GM10248 (cell line): ENCODE measurements at regions of chr9 and their contacts with region 1.

Region 1: DNA sequence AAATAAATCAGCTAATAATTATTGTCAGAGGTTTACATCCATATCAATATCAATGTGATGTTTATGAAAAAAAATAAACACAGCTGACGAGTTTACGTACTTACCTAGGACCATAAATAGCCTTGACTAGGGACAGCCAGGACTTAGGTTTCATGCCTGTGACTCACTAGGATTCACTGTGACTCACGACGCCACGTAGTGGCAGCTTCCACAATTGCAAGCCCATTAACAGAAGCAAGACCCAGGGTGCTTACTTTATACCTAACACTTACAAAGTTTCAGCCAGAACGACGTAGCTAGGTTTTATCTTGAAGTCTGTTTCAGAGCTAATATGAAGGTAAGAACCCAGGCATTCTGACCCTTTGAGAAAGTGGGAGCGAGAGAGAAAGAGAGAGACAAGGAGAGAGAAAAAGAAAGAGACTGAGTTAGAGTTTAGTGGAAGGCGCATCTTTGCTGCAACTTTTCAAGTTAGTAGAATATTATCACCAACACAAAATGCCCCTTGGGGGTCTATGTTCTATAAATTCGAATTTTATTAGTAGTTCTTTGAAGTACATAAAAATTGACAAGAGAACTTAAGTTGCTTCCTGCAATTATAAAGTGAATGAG is 191.2 kb downstream of the GNA14 start:
- DNase-seq: peak; percentile 79
- CTCF ChIP-seq: peak; percentile 82

Region 2: DNA sequence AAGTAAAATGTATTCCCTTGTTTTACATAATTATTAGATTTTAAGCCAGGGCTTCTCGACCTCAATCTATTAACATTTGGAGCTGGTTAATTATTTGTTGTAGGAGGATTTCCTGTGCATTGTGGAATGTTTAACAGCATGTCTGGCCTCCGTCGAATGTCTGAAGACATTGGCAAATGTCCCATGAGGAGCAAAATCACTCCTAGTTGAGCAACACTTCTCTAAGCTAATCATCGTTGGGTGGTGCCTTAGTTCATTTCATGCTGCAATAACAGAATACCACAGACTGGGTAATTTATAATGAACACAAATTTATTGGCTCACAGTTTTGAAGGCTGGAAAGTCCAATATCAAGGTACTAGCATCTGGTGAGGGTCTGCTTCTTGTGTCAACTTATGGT is 293.0 kb before region 1 on chr9:
- CTCF ChIA-PET with region 1: interaction called, 21 read pairs
- POLR2A ChIA-PET with region 1: no interaction called
- DNase-seq: no peak
- CTCF ChIP-seq: no peak

Region 3: DNA sequence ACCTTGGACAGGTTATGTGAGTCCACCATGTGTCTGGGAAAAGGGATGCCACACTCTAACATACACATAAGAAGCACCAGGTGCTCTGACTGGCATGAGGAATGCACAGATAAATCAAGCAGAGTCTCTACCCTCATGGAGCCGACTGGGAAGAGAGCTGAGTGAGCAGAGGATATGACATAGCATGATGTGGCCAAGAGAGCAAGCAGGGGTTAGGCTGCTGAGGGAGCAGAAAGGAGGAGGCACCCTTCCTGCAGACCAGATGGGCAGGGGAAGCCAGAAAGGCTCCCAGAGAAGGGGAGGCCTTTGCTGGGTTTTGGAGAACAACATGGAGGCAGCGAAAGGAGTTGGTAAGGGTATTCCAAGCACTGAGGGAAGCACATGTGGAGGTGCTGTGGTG is 31.9 kb before region 1 on chr9:
- CTCF ChIA-PET with region 1: interaction called, 23 read pairs
- POLR2A ChIA-PET with region 1: no interaction called
- DNase-seq: no peak
- CTCF ChIP-seq: no peak

Region 4: GRCh38 chr9:77440057-77440456 is 16.9 kb before region 1 on chr9:
- CTCF ChIA-PET with region 1: interaction called, 162 read pairs
- POLR2A ChIA-PET with region 1: no interaction called
- DNase-seq: no peak
- CTCF ChIP-seq: no peak

Region 5: DNA sequence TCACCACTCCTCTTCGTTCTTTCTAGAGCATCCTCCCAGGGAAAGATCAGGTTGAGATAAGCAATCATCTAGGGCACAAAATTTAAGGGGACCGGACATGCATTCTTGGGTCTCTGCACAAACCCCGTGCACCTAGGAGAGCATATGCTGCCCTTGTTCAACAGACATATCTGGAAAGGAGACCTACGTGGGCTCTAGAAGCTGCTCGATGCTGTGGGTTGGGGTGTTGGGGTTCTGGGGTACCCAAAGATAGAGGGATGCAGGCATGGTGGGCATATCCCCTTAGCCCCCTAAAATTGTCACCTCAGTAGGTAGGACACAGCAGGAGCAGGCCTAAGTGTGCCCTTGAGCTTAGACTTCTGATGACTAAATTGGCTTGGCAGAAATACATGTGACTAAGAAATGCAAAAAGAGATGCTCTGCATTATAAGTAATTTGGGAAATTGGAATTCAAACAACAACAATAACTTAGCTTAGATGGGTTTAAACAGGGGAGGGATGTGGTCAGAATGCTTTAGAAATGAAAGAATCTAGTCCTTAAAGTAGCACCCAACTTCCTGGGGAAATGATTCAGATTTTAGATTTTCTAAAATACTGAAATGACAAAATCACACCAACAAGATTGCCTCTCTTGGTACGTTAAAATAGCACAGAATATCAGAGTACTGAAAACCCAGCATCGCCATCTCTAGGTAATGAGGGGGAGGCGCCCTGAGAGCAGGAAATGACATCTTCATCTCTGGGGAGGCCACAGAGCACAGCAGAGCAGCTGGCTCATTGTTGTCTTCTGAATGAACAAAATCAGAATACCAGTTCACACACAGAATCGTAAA is 18.9 kb after region 1 on chr9:
- CTCF ChIA-PET with region 1: interaction called, 99 read pairs
- POLR2A ChIA-PET with region 1: no interaction called
- DNase-seq: no peak
- CTCF ChIP-seq: no peak

Region 6: DNA sequence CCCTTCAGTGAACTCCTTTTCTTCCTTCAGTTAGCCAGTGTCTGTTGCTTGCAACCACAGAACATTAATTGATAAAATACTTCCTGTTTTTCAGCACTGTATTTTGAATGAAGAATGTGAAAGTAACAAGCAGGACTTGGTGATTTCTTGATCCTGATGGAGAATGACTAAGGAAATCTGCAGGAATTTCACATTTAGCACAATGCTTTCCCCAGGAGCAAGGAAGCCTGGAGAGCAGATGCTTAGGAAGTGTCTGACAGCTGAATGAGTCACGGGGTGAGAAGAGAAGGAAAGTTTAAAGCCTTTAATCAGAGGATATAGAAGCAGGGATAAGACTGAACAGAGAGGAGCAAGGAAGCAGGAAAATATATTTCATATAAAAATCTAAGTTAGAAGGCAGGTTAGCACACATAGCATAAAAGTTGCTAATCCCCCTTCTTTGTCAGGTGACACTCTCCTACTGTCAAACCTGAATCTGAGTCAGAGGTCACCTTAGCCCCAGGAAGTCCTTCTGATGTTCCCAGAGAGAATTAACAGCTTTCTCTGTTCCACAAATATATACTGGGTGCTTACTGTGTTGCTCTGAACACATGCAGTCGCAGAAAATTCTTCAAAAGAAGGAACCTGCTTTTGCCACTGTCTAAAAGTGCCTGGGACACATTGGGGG is 131.5 kb after region 1 on chr9:
- CTCF ChIA-PET with region 1: no interaction called
- POLR2A ChIA-PET with region 1: no interaction called
- DNase-seq: no peak
- CTCF ChIP-seq: no peak

Region 7: DNA sequence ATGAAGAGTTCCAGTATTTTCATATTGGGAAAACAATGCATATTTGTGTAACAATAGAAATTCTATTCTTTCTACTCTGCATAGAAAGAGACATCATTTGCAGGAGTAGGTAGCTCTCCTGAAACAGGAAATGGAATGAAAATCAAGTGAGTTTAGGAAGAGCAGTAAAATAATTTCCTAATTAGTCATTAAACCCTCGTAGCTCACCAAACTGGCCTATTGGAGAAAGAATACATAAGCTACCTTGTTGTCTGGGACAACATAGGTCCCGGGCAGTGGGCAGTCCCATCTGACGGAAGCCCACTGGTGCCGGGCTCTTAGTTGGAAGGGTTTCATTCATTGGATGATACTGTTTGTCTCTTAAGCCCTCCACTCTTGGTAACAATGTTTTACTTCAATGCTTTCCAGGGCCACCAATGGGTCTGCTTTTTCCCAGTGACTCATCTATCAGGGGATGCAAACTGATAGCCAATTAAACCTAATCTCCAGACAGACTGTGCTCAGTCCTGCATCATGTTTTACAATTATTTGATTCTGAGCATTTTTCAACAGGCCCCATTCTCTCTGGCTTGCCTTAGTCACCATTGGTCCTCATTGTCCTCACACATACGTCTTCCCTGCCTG is 144.7 kb after region 1 on chr9:
- CTCF ChIA-PET with region 1: no interaction called
- POLR2A ChIA-PET with region 1: no interaction called
- DNase-seq: no peak
- CTCF ChIP-seq: no peak

Region 8: GRCh38 chr9:77751341-77752091 is 294.6 kb after region 1 on chr9:
- CTCF ChIA-PET with region 1: interaction called, 10 read pairs
- POLR2A ChIA-PET with region 1: no interaction called
- DNase-seq: peak; percentile 15
- CTCF ChIP-seq: peak; percentile 44